A549 (cell line): ENCODE measurements at regions of chr9 and their contacts with region 1.

Region 1: GRCh38 chr9:137150617-137151457 is 11.9 kb downstream of the GRIN1 start:
- DNase-seq: peak; percentile 74 to 87
- ATAC-seq: peak in 1 of 2 experiments; percentile 47; a peak in 3 of 6 replicates
- H3K4me3 ChIP-seq: no peak overlapping the region
- H3K27ac ChIP-seq: peak overlapping the region in 1 of 2 experiments; percentile 55; a peak in 3 of 6 replicates
- H3K4me1 ChIP-seq: peaks cover 21% of the 10 kb centered on the region; the same call in 1 of the 3 replicates
- CTCF ChIP-seq: no peak
- EP300 ChIP-seq: no peak
- POLR2A ChIP-seq: no peak
- RAD21 ChIP-seq: no peak

Region 2: GRCh38 chr9:137129456-137130175 is 21.2 kb before region 1 on chr9:
- CTCF ChIA-PET with region 1: interaction called, 4 read pairs
- POLR2A ChIA-PET with region 1: interaction called, 18 read pairs
- DNase-seq: peak; percentile 93 to 95
- ATAC-seq: peak; percentile 95 to 96
- H3K4me3 ChIP-seq: peak overlapping the region; percentile 94
- H3K27ac ChIP-seq: peak overlapping the region; percentile 98
- H3K4me1 ChIP-seq: peaks cover 17% of the 10 kb centered on the region
- CTCF ChIP-seq: no peak
- EP300 ChIP-seq: no peak
- POLR2A ChIP-seq: peak; percentile 85
- RAD21 ChIP-seq: no peak

Region 3: GRCh38 chr9:137200311-137201204 is 49.7 kb after region 1 on chr9 and contains the start of gene TPRN:
- CTCF ChIA-PET with region 1: interaction called, 4 read pairs
- POLR2A ChIA-PET with region 1: interaction called, 14 read pairs
- DNase-seq: peak; percentile 98 to 100
- ATAC-seq: peak; percentile 87 to 96
- H3K4me3 ChIP-seq: peak within 1 kb of the TSS; percentile 60
- H3K27ac ChIP-seq: peak within 1 kb of the TSS; percentile 80 to 87
- H3K4me1 ChIP-seq: peaks cover 38% of the 10 kb centered on the region
- CTCF ChIP-seq: no peak
- EP300 ChIP-seq: no peak
- POLR2A ChIP-seq: peak; percentile 82
- RAD21 ChIP-seq: no peak
- polyA plus RNA-seq, gene TPRN: 2.1 and 2.4 TPM in 2 replicates

Region 4: DNA sequence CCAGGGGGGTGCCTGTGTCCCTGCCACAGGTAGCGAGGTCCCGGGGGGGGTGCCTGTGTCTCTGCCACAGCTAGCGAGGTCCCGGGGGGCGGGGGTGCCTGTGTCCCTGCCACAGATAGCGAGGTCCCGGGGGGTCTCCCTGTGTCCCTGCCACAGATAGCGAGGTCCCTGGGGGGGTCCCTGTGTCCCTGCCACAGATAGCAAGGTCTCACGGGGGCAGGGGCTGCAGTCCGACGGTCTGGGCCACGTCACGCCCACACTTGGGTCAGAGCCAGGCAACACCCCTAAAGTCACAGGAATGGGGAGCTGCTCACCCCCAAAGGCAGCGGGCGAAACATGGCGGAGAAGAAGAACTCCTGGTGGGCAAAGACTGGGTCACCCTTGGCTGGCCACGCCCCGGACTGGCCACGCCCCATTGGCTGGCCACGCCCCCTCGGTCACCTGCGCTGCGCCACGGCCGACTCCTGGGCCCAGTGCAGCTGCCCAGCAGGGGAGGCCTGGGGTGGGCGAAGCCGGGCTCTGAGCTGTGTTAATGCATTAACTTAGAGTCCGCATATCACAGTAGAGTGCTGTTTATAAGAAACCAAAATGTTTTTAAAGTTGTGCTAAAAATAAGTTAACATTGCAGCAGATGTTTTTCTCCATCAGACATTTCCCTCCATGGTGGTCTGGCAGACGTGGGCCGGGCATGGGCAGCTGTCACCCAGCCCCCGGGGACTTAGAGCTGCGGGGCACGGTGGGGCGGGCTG is 279.3 kb after region 1 on chr9:
- CTCF ChIA-PET with region 1: no interaction called
- POLR2A ChIA-PET with region 1: no interaction called
- DNase-seq: no peak
- ATAC-seq: peak; percentile 45 to 77; a peak in 4 of 6 replicates
- H3K4me3 ChIP-seq: peak overlapping the region; percentile 30
- H3K27ac ChIP-seq: peak overlapping the region in 1 of 2 experiments; percentile 66; a peak in 3 of 6 replicates
- H3K4me1 ChIP-seq: peaks cover 10% of the 10 kb centered on the region; the same call in 1 of the 3 replicates
- CTCF ChIP-seq: no peak
- EP300 ChIP-seq: no peak
- POLR2A ChIP-seq: no peak
- RAD21 ChIP-seq: no peak